ENCODE measurements at regions of chr2 and their contacts with region 1.

Region 1: DNA sequence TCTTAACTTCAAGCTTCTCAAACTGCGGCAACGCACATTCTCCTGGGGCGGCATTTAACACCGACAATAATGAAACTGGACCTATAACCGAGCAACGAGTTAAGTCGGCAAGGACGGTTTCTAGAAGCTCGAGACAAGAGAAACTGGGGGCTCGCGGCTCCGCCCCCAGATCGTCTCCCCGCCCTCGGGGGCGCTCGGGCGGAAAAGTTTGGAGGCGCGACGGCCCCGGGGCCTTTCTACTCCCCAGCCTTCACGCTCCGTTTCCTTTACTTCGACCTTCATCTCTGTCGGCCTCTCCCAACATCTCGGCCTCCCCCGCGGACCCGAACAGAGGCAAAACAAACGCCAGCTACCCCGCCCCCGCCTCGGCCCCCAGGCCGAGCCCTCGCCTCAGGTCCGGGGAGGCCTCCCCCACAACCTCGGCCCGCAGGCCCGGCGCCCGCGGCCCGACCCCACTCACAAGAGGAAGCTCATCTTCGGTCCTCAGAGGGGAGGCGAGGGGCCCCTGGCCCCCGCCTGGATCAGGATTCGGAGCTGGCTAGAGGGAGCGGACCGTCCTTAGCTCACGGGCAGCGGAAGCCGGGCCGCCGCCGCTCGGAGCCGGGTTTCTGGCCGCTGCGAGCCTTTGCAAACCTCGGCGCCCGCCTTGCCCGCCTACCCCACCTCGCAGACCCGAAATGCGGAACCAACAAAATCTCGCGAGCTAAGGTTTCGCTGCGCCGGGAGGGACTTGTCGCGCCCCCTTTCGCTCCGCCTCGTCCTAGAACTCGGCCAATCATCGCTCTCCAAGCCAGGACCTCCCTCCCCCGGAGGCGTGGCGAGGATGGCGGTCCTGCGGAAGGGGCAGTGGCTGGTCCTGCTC is at the start of gene MOB1A:
- DNase-seq: peak; percentile 96 to 99
- ATAC-seq: peak; percentile 98 to 99
- H3K4me3 ChIP-seq: peak within 1 kb of the TSS; percentile 85
- H3K27ac ChIP-seq: peak within 1 kb of the TSS; percentile 92 to 95
- H3K4me1 ChIP-seq: peaks cover 12% of the 10 kb centered on the region; the same call in 2 of the 3 replicates
- CTCF ChIP-seq: no peak
- EP300 ChIP-seq: no peak
- POLR2A ChIP-seq: peak; percentile 86
- RAD21 ChIP-seq: no peak
- polyA plus RNA-seq, gene MOB1A: 108 and 118 TPM in 2 replicates

Region 2: GRCh38 chr2:74191596-74192380 is 13.4 kb after region 1 on chr2:
- CTCF ChIA-PET with region 1: interaction called, 17 read pairs
- POLR2A ChIA-PET with region 1: interaction called, 13 read pairs
- DNase-seq: no peak
- ATAC-seq: 0 out of 6 replicates have a peak, but pooled peaks of 1 of the 2 experiments have one; percentile 26
- H3K4me3 ChIP-seq: no peak overlapping the region
- H3K27ac ChIP-seq: no peak overlapping the region
- H3K4me1 ChIP-seq: peaks cover 6% of the 10 kb centered on the region; the same call in 1 of the 3 replicates
- CTCF ChIP-seq: no peak
- EP300 ChIP-seq: no peak
- POLR2A ChIP-seq: no peak
- RAD21 ChIP-seq: no peak

Region 3: DNA sequence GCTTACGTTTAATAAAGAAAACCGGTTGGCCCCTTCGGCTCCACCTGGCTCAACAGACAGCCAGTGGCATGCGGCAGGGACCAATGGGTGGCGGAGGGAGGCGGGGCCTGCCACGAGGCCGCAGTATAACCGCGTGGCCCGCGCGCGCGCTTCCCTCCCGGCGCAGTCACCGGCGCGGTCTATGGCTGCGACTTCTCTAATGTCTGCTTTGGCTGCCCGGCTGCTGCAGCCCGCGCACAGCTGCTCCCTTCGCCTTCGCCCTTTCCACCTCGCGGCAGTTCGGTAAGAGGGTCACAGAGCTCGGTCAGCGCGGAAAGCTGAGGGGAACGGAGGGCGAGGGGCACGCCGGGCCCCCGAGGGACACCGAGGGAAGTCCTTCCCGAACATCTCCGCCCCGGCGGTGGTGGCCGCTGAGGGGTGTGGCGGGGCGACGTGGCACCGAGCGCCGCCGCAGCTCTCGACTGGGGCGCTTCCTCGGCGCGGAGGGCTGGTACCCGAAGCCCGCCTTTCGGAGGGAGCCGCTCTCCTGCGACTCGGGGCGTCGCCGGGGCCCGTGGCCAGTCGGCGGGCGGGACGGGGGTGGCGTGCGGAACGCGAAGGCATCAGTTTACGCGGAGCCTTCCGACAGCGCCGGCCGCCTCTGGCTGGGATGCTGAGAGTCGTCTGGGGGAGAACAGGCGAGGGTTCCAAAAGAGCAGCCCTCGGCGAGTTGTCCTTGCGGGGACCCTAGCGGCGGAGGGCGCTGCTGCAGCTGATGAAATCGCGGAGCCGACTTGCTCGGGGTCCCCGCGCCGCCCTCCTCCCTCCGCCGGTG is 20.2 kb after region 1 on chr2 and contains the start of gene MTHFD2:
- CTCF ChIA-PET with region 1: interaction called, 16 read pairs
- POLR2A ChIA-PET with region 1: interaction called, 29 read pairs
- DNase-seq: peak; percentile 99 to 100
- ATAC-seq: peak; percentile 92 to 95
- H3K4me3 ChIP-seq: peak within 1 kb of the TSS; percentile 94
- H3K27ac ChIP-seq: peak within 1 kb of the TSS; percentile 95 to 100
- H3K4me1 ChIP-seq: peaks cover 42% of the 10 kb centered on the region
- CTCF ChIP-seq: peak; percentile 54
- EP300 ChIP-seq: peak in 1 of 2 experiments; percentile 13; a peak in 1 of 5 replicates
- POLR2A ChIP-seq: peak; percentile 100
- RAD21 ChIP-seq: peak; percentile 26 to 27; a peak in 2 of 5 replicates
- polyA plus RNA-seq, gene MTHFD2: 429 and 608 TPM in 2 replicates